ENCODE measurements at regions of chr1 and their contacts with region 1.

Region 1: DNA sequence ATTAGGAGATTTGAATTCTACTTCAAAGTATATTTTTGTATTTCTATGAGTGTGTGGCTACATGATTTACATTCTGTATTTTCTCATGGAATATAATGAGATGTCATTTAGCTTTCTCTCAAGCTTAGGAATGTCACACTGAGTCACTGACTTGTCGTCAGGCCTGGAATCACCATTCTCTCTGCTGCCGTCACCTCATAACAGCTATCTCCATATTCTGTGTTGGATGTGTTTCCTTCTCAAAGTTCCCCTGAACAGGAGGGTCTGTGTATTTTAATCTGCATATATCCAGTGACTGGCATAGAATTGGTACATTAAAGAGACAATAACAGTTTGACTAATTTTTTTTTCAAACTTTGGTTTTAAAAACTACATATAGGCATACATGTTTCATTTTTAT is 35.9 kb downstream of the LYPLAL1 start:
- DNase-seq: no peak
- H3K4me3 Mint-ChIP-seq: no peak overlapping the region
- H3K27ac Mint-ChIP-seq: no peak overlapping the region
- H3K4me1 Mint-ChIP-seq: peaks cover 9% of the 10 kb centered on the region
- H3K27me3 Mint-ChIP-seq: no peaks in the 10 kb centered on the region
- CTCF ChIP-seq: no peak

Region 2: GRCh38 chr1:218865591-218865990 is 344.0 kb before region 1 on chr1:
- CTCF ChIA-PET with region 1: no interaction called
- intact Hi-C with region 1: no loop called
- DNase-seq: peak; percentile 61
- H3K4me3 Mint-ChIP-seq: no peak overlapping the region
- H3K27ac Mint-ChIP-seq: peak overlapping the region; percentile 77
- H3K4me1 Mint-ChIP-seq: peaks cover 72% of the 10 kb centered on the region
- H3K27me3 Mint-ChIP-seq: no peaks in the 10 kb centered on the region
- CTCF ChIP-seq: no peak

Region 3: GRCh38 chr1:219317762-219318353 is 108.3 kb after region 1 on chr1:
- CTCF ChIA-PET with region 1: no interaction called
- intact Hi-C with region 1: loop called (anchors 2 kb)
- DNase-seq: peak; percentile 31
- H3K4me3 Mint-ChIP-seq: no peak overlapping the region
- H3K27ac Mint-ChIP-seq: no peak overlapping the region
- H3K4me1 Mint-ChIP-seq: peaks cover under 1% of the 10 kb centered on the region
- H3K27me3 Mint-ChIP-seq: no peaks in the 10 kb centered on the region
- CTCF ChIP-seq: no peak

Region 4: GRCh38 chr1:219416594-219417238 is 207.1 kb after region 1 on chr1:
- CTCF ChIA-PET with region 1: no interaction called
- intact Hi-C with region 1: loop called (anchors 10 kb)
- DNase-seq: peak; percentile 80
- H3K4me3 Mint-ChIP-seq: no peak overlapping the region
- H3K27ac Mint-ChIP-seq: no peak overlapping the region
- H3K4me1 Mint-ChIP-seq: peaks cover 20% of the 10 kb centered on the region
- H3K27me3 Mint-ChIP-seq: no peaks in the 10 kb centered on the region
- CTCF ChIP-seq: peak; percentile 84

Region 5: DNA sequence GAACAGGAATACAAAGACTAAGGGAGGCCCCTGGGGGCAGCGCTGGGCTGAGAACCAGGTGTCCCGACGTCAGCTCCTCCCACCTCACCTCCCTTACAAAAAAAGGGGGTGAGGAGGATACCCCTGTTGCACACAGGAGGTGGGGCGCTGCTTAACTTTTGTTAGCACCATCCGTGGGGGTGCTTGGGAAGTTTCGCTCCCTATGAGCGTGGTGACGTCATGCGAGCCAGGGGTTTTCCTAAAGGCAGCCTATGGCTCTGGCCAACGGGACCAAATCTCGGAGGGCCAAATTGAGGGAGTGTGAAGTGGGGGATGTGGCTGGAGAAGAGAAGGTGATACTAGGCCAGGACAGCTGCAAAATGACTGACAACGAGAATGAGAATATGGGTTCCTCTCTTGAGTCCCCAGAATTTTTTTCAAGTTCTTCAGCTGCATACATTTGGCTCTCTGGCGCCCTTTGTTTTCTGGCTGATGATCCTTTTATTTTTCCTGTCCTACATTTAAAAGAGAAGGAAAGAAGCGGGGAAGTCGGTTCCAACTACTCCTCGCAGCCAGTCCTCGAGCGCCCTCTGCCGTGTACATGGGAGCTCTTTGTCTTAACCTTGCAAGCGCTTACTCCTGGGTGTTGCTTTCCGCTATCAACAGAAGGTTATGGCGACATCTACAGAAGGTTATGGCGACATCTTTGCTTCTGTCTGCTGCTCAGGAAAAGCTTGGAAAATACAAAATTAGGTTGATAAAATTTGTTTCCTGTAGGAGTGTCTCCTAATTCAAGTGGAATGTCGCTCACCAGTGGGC is 451.3 kb after region 1 on chr1:
- CTCF ChIA-PET with region 1: no interaction called
- intact Hi-C with region 1: loop called (anchors 10 kb)
- DNase-seq: peak; percentile 88
- H3K4me3 Mint-ChIP-seq: peak overlapping the region; percentile 10
- H3K27ac Mint-ChIP-seq: no peak overlapping the region
- H3K4me1 Mint-ChIP-seq: peaks cover 9% of the 10 kb centered on the region
- H3K27me3 Mint-ChIP-seq: peaks cover 7% of the 10 kb centered on the region
- CTCF ChIP-seq: peak; percentile 75

Measured in Calu3 (cell line).